Endothelial cell of umbilical vein (primary cell): ENCODE measurements at regions of chr16 and their contacts with region 1.

Region 1: DNA sequence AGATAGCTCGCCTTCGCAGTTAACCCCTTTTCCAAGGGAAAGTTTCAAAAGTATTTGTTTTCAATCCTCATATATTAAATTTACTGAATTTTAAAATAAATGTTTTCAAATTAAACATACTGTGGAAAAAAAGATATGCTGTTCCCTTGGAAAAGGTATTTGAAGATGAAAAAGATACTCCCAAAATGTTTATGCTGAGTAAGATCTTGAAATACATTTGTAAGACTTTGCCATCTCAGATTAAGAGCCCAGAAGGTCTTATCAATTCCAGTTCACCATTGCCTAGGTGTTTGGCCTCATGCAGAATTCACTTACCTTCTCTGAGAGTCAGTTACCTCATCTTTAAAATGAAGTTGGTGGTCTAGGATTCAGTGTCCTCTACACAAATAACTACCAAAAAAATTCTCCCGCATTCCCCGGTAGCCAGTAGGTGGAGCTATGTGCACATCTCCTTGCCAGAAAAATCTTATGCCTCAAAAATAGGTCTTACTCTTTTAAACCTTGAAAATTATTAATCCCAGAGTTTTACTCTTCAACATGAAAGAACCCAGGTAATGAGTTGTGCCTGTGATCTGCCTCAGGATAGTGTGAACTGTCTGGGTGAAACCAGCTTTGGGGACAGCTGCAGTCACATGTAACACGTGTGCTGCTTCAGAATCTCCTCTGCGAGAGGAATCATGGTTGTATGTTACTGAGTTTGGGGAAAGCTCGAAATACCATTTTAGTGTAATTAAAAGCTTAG is 178.3 kb downstream of the MRTFB start:
- DNase-seq: peak; percentile 62
- H3K4me3 ChIP-seq: no peak overlapping the region
- H3K27ac ChIP-seq: no peak overlapping the region
- H3K4me1 ChIP-seq: no peaks in the 10 kb centered on the region
- H3K27me3 ChIP-seq: no peaks in the 10 kb centered on the region
- CTCF ChIP-seq: peak; percentile 68 to 77
- POLR2A ChIP-seq: no peak

Region 2: GRCh38 chr16:14186007-14186794 is 63.3 kb before region 1 on chr16:
- CTCF ChIA-PET with region 1: interaction called, 10 read pairs
- POLR2A ChIA-PET with region 1: no interaction called
- dilution Hi-C with region 1: no loop called
- intact Hi-C with region 1: no loop called
- DNase-seq: peak; percentile 78
- H3K4me3 ChIP-seq: no peak overlapping the region
- H3K27ac ChIP-seq: no peak overlapping the region
- H3K4me1 ChIP-seq: peaks cover 19% of the 10 kb centered on the region
- H3K27me3 ChIP-seq: no peaks in the 10 kb centered on the region
- CTCF ChIP-seq: peak; percentile 28 to 48
- POLR2A ChIP-seq: no peak

Region 3: GRCh38 chr16:14263011-14263410 is 13.5 kb after region 1 on chr16:
- CTCF ChIA-PET with region 1: interaction called, 18 read pairs
- POLR2A ChIA-PET with region 1: no interaction called
- dilution Hi-C with region 1: no loop called
- intact Hi-C with region 1: no loop called
- DNase-seq: no peak
- H3K4me3 ChIP-seq: no peak overlapping the region
- H3K27ac ChIP-seq: no peak overlapping the region
- H3K4me1 ChIP-seq: no peaks in the 10 kb centered on the region
- H3K27me3 ChIP-seq: no peaks in the 10 kb centered on the region
- CTCF ChIP-seq: no peak
- POLR2A ChIP-seq: no peak

Region 4: DNA sequence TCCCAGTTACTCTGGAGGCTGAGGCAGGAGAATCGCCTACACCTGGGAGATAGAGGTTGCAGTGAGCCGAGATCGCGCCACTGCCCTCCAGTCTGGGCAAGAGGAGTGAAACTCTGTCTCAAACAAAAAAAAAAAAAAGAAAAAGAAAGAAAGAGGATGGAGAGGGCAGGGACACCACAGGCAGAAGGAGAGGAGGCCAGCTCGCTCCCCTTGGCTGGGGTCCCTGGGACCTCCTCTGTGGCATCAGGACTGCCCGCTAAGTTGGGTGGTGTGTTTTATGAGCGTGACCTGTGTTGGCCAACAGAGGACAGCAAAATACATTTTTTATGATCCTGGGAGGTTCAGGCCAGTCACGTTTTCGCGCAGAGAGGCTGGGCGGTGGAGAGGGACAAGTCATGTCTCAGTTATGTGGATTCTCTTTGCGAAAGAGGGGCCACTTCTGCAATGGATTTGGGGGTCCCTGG is 51.3 kb after region 1 on chr16:
- CTCF ChIA-PET with region 1: no interaction called
- POLR2A ChIA-PET with region 1: no interaction called
- dilution Hi-C with region 1: no loop called
- intact Hi-C with region 1: loop called (anchors 5 kb)
- DNase-seq: peak; percentile 78
- H3K4me3 ChIP-seq: no peak overlapping the region
- H3K27ac ChIP-seq: no peak overlapping the region
- H3K4me1 ChIP-seq: peaks cover 10% of the 10 kb centered on the region
- H3K27me3 ChIP-seq: no peaks in the 10 kb centered on the region
- CTCF ChIP-seq: peak; percentile 43 to 70
- POLR2A ChIP-seq: no peak

Region 5: DNA sequence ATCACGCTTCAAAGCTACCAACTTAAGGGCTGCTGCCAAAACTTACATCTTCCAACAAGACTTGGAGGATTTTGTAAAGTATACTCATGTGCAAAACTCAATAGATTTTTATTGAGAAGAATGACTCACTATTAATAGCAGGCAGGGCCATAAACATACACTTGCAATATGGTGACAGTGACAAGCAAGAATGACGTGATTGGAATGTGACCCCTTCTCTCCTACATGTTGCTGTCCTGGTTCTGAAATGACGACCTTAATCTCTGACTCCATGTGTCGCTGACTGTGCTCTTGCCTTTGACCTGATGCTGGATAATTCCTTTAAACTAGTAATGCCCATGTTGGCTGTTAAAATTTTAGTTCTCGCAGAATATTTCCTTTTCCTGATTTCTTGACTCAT is 206.1 kb after region 1 on chr16:
- CTCF ChIA-PET with region 1: no interaction called
- POLR2A ChIA-PET with region 1: no interaction called
- dilution Hi-C with region 1: no loop called
- intact Hi-C with region 1: no loop called
- DNase-seq: no peak
- H3K4me3 ChIP-seq: no peak overlapping the region
- H3K27ac ChIP-seq: no peak overlapping the region
- H3K4me1 ChIP-seq: no peaks in the 10 kb centered on the region
- H3K27me3 ChIP-seq: no peaks in the 10 kb centered on the region
- CTCF ChIP-seq: no peak
- POLR2A ChIP-seq: no peak

Region 6: GRCh38 chr16:14600164-14600563 is 350.7 kb after region 1 on chr16:
- CTCF ChIA-PET with region 1: interaction called, 11 read pairs
- POLR2A ChIA-PET with region 1: no interaction called
- dilution Hi-C with region 1: no loop called
- intact Hi-C with region 1: loop called (anchors 2 kb)
- DNase-seq: peak; percentile 54
- H3K4me3 ChIP-seq: no peak overlapping the region
- H3K27ac ChIP-seq: no peak overlapping the region
- H3K4me1 ChIP-seq: no peaks in the 10 kb centered on the region
- H3K27me3 ChIP-seq: no peaks in the 10 kb centered on the region
- CTCF ChIP-seq: peak; percentile 17 to 29
- POLR2A ChIP-seq: no peak